ENCODE measurements at regions of chr2 and their contacts with region 1.

Region 1: GRCh38 chr2:164560181-164560792 is 61.0 kb downstream of the GRB14 start:
- DNase-seq: peak; percentile 11
- CTCF ChIP-seq: peak; percentile 59

Region 2: GRCh38 chr2:163703386-163703785 is 856.9 kb before region 1 on chr2:
- CTCF ChIA-PET with region 1: no interaction called
- POLR2A ChIA-PET with region 1: no interaction called
- DNase-seq: no peak
- CTCF ChIP-seq: no peak

Region 3: GRCh38 chr2:164545484-164545883 is 14.8 kb before region 1 on chr2:
- CTCF ChIA-PET with region 1: interaction called, 13 read pairs
- POLR2A ChIA-PET with region 1: no interaction called
- DNase-seq: no peak
- CTCF ChIP-seq: no peak

Region 4: DNA sequence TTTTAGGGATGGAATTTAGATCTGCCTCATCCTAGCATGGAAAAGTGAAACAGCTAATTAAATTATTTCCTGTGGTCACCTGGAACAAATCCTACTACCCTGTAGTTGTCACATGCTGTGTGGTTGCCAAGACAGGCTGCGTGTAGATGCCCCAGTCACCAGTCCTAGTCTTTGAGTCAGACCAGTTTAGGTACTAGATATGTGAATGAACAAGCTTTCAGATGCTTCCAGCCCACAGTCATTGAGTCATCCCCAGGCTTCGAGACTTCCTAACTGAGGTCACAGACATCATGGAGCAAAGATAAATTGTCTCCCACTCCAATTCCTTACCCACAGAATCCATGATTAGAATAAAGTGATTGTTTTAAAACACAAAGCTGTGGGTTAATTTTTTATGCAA is 96.8 kb after region 1 on chr2:
- CTCF ChIA-PET with region 1: no interaction called
- POLR2A ChIA-PET with region 1: no interaction called
- DNase-seq: no peak
- CTCF ChIP-seq: no peak

Measured in GM10248 (cell line).